ENCODE measurements at regions of chr6 and their contacts with region 1.

Region 1: GRCh38 chr6:133923938-133924593 is 29.0 kb upstream of the TBPL1 start:
- DNase-seq: no peak
- ATAC-seq: peak; percentile 91

Region 2: DNA sequence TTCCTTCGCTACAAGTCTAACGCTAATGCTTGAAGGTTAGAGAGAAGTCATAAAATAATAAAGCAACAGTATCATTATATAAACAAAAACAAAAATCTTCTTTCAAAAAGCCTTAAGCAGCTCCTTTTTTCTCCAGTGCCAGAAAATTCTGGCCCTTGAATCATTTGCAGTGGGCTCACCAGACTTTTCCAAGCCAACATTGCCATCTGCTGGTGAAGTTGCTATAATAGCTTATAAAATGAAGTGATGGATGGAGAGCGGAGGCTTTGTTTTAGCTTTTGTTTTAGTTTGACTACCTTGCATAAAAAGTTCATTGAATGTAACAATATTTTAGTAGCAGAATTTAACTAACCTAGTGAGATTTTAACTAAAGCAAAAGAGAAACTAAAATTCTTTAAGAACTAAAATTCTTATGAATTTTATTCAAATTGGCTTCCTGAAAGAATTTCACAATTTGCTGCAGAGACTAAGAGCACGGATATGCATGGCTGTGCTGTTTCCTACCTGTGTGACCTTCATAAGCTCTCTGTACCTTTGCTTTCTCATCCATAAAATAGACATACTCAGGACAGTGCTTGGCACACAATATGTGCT is 173.1 kb after region 1 on chr6:
- intact Hi-C with region 1: loop called (anchors 1 kb)
- DNase-seq: peak; percentile 32
- ATAC-seq: peak; percentile 60